Panc1 (cell line): ENCODE measurements at regions of chr19 and their contacts with region 1.

Region 1: DNA sequence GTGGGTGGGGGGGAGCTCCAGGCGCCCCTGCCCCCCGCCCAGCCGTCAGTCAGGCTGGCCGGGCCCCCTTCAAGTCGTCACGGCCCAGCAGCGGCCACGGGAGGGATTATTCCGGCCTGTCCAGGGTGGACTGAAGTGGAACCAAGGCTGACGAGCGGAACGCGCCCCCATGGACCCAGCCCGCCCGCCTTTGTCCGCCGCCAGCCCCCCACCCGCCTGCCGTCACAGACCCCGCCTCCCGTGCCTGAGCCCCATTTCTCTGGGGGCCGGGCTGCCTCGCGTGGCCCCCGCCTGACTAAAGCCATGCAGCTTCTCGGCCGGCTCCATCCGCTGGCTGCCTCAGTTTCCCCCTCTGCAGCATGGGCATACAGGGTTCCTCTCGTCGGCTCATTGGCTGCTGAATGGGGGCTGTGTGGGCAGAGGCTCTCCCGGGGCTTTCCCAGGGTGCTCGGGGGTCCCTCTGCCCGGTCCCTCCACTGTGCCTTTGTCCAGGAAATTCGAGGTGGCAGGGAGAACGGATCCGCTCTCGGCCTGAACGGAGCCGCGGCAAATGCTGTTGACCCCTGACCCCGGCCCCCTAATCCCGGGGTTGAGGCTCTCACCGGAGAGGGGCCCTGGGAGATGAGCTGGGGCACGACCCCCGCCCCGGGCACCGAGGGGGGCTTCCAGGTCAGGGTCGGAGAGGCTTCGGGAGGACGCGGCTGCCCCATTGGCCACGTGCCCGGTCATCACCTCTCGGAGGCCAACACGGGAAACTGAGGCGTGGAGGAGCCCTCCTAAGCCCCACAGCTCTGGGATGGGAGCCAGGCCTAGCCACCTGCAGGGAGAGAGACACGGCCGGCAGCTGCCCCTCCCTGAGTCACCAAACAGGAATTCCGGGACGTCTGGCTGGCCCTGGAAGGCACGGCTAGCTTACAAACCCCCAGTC is 27.4 kb downstream of the EFNA2 start:
- DNase-seq: no peak
- ATAC-seq: peak; percentile 57; the same call in 1 of the 2 replicates
- H3K4me3 ChIP-seq: no peak overlapping the region; a peak in 1 of 4 replicates
- H3K27ac ChIP-seq: peak overlapping the region; percentile 12; the same call in 1 of the 2 replicates
- H3K4me1 ChIP-seq: peaks cover 30% of the 10 kb centered on the region
- H3K27me3 ChIP-seq: no peaks in the 10 kb centered on the region
- CTCF ChIP-seq: no peak

Region 2: GRCh38 chr19:1287354-1288225 is 25.4 kb before region 1 on chr19:
- CTCF ChIA-PET with region 1: interaction called, 15 read pairs
- POLR2A ChIA-PET with region 1: no interaction called
- in situ Hi-C with region 1: no loop called
- intact Hi-C with region 1: no loop called
- DNase-seq: no peak
- ATAC-seq: peak; percentile 67
- H3K4me3 ChIP-seq: peak overlapping the region in 1 of 2 experiments; percentile 42; a peak in 1 of 4 replicates
- H3K27ac ChIP-seq: no peak overlapping the region
- H3K4me1 ChIP-seq: peaks cover 16% of the 10 kb centered on the region
- H3K27me3 ChIP-seq: no peaks in the 10 kb centered on the region
- CTCF ChIP-seq: no peak